H1 (cell line): ENCODE measurements at regions of chr6 and their contacts with region 1.

Region 1: GRCh38 chr6:109783250-109783986 is 92.3 kb downstream of the FIG4 start:
- DNase-seq: peak in 1 of 2 experiments; percentile 57
- H3K4me3 ChIP-seq: no peak overlapping the region
- H3K27ac ChIP-seq: no peak overlapping the region
- H3K4me1 ChIP-seq: no peaks in the 10 kb centered on the region
- H3K27me3 ChIP-seq: no peaks in the 10 kb centered on the region
- CTCF ChIP-seq: peak in 2 of 3 experiments; percentile 75 to 79; a peak in 3 of 4 replicates
- EP300 ChIP-seq: no peak
- POLR2A ChIP-seq: no peak
- RAD21 ChIP-seq: peak; percentile 80 to 86

Region 2: DNA sequence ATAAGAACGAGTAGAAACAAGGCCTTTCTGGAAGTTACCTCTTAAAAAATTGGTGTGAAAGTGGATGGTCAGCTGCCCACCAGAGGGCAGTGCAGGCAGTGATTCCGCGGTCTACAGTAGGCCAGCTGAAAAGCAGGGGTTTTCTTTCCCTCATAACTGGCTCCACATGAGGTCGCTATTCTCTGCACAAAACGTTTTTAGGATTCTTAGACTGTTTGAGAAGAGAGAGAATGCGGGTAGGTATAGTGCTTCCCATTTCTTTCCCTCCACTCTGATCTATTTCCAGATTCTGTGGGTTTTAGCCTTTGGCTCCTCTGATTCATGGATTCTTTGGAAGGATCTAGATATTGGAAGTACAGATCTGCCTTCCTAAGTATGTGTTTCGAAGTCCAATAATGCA is 78.2 kb before region 1 on chr6:
- CTCF ChIA-PET with region 1: interaction called, 52 read pairs
- POLR2A ChIA-PET with region 1: no interaction called
- DNase-seq: peak; percentile 75 to 83
- H3K4me3 ChIP-seq: no peak overlapping the region
- H3K27ac ChIP-seq: no peak overlapping the region
- H3K4me1 ChIP-seq: peaks cover 0 to 5% (median 3%) of the 10 kb centered on the region in 4 experiments; a peak in 5 of 7 replicates
- H3K27me3 ChIP-seq: no peaks in the 10 kb centered on the region
- CTCF ChIP-seq: peak; percentile 88 to 99 (median 98)
- EP300 ChIP-seq: no peak
- POLR2A ChIP-seq: no peak
- RAD21 ChIP-seq: peak; percentile 99 to 100

Region 3: DNA sequence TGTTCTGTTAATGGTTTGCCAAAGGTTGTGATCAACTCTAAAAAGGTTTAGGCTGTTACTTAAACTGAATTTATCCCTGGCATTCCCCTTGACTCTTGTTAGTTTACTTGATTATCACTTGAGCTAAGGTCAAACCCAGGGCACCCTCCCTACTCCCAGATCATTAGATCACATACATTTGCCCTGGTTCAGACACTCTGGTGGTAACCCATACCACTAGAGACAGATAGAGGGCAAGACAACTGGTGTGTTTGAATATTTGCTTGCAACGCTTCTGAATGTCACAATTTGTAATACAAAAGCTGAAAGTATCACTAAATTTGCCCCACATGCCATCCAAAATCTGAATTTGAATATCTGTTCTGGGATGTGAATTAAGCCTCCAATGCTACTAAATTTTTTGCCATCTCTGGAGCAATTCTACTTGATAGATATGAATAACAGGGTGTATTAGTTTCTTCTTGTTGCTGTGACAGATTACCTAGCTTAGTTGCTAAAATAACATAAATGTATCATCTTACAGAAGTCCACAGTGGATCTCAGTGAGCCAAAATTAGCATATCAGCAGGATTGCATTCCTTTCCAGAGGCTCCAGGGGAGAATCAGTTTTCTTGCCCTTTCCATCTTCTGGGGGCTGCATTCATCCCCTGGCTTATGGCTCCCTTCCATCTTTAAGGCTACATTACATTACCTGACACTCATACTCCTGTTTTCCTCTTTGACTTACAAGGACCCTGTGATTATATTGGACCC is 47.0 kb before region 1 on chr6:
- CTCF ChIA-PET with region 1: interaction called, 11 read pairs
- POLR2A ChIA-PET with region 1: no interaction called
- DNase-seq: no peak
- H3K4me3 ChIP-seq: peak overlapping the region in 1 of 4 experiments; percentile 20; a peak in 1 of 8 replicates
- H3K27ac ChIP-seq: no peak overlapping the region
- H3K4me1 ChIP-seq: peaks cover 4 to 16% (median 12%) of the 10 kb centered on the region in 4 experiments; a peak in 6 of 7 replicates
- H3K27me3 ChIP-seq: no peaks in the 10 kb centered on the region
- CTCF ChIP-seq: no peak
- EP300 ChIP-seq: no peak
- POLR2A ChIP-seq: no peak
- RAD21 ChIP-seq: no peak

Region 4: DNA sequence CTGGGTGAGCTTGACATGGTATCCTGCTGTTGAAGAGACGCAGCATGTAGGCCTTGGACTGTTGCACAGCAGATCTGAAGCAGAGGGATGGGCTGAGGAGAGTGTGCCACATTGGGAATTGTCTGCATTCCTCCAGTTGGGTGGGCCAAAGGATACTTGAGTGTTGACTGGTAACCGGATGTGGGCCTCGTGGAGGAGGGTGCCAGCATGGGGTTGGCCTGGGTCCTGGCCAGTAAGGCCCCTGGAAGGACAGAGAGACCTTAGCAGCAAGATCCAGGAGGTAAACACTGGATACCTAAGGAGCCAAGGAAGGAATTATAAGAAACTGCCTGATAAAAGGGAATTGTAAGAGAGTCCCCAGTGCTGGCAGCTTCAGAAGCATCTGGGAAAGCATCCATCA is 15.5 kb before region 1 on chr6:
- CTCF ChIA-PET with region 1: interaction called, 23 read pairs
- POLR2A ChIA-PET with region 1: no interaction called
- DNase-seq: no peak
- H3K4me3 ChIP-seq: no peak overlapping the region
- H3K27ac ChIP-seq: no peak overlapping the region
- H3K4me1 ChIP-seq: no peaks in the 10 kb centered on the region
- H3K27me3 ChIP-seq: no peaks in the 10 kb centered on the region; a peak in 1 of 7 replicates
- CTCF ChIP-seq: no peak
- EP300 ChIP-seq: no peak
- POLR2A ChIP-seq: no peak
- RAD21 ChIP-seq: no peak

Region 5: GRCh38 chr6:109801794-109802193 is 18.4 kb after region 1 on chr6:
- CTCF ChIA-PET with region 1: interaction called, 19 read pairs
- POLR2A ChIA-PET with region 1: no interaction called
- DNase-seq: no peak
- H3K4me3 ChIP-seq: no peak overlapping the region
- H3K27ac ChIP-seq: no peak overlapping the region
- H3K4me1 ChIP-seq: no peaks in the 10 kb centered on the region
- H3K27me3 ChIP-seq: no peaks in the 10 kb centered on the region
- CTCF ChIP-seq: no peak
- EP300 ChIP-seq: no peak
- POLR2A ChIP-seq: no peak
- RAD21 ChIP-seq: no peak

Region 6: DNA sequence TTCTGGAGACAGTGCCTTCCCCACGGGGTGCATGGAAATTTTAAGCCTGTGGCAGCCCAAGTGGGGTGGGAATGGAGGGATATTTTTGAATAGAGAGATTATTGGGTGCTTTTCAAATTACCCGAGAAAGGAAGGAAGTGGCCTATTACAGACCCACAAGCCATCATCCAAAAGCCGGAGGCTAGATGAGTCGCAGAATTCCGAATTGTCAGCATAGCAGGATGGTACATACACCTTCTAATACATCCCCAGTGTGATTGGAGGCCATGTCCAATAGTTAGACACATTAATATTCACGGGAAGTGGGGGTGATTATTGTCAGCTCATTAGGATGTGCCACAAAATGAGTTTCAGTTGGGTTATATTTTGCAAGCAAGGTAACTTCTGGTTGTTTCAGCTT is 40.7 kb after region 1 on chr6:
- CTCF ChIA-PET with region 1: interaction called, 12 read pairs
- POLR2A ChIA-PET with region 1: no interaction called
- DNase-seq: no peak
- H3K4me3 ChIP-seq: no peak overlapping the region
- H3K27ac ChIP-seq: no peak overlapping the region
- H3K4me1 ChIP-seq: peaks cover 0 to 8% (median 3%) of the 10 kb centered on the region in 4 experiments; a peak in 5 of 7 replicates
- H3K27me3 ChIP-seq: no peaks in the 10 kb centered on the region
- CTCF ChIP-seq: no peak
- EP300 ChIP-seq: no peak
- POLR2A ChIP-seq: no peak
- RAD21 ChIP-seq: no peak

Region 7: DNA sequence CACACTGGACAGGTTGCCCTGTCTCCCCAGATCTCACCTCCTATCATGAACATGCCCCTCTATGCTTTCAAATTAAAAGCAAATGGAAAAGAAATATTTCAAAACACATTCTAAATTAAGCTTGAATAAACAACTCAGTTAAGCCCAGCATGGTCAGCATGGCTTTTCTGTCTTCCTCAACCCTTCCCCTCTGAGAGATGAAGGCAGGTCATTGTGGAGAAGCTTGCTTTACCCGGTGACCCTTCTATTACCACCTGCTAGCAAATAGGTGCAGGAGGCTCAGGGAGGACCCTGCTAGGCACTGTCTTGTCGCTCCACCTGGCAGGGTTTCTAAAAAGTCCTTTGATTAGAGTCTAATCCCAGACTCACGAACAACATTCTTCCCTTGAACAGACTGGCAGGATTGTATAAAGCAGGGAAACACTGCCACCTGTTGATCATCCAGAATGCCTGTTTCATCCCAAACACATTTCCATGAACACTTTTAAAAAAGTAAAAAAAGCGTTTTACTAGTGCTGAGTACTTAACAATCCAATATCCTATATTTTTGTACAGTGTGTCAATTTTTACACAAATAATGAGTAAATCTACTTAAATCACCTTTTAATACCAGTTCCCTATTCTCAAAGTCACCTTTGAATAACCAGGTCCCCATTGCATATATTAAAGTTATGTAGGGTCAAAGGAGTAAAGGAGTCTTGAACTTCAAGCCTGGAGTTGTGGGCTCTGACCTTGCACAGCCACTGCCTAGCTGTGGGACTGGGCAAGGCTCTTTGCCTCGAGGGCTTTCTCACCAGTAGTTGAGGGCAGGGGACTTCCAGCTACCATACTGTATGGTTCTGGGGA is 270.2 kb after region 1 on chr6:
- CTCF ChIA-PET with region 1: interaction called, 29 read pairs
- POLR2A ChIA-PET with region 1: no interaction called
- DNase-seq: no peak
- H3K4me3 ChIP-seq: no peak overlapping the region
- H3K27ac ChIP-seq: no peak overlapping the region
- H3K4me1 ChIP-seq: peaks cover 0 to 3% (median 0%) of the 10 kb centered on the region in 4 experiments; a peak in 1 of 7 replicates
- H3K27me3 ChIP-seq: no peaks in the 10 kb centered on the region
- CTCF ChIP-seq: peak in 2 of 3 experiments; percentile 71 to 78; a peak in 3 of 4 replicates
- EP300 ChIP-seq: no peak
- POLR2A ChIP-seq: no peak
- RAD21 ChIP-seq: peak; percentile 90 to 91

Region 8: GRCh38 chr6:110799189-110799588 is 1015.8 kb after region 1 on chr6:
- CTCF ChIA-PET with region 1: no interaction called
- POLR2A ChIA-PET with region 1: no interaction called
- DNase-seq: no peak
- H3K4me3 ChIP-seq: no peak overlapping the region
- H3K27ac ChIP-seq: no peak overlapping the region
- H3K4me1 ChIP-seq: no peaks in the 10 kb centered on the region
- H3K27me3 ChIP-seq: no peaks in the 10 kb centered on the region
- CTCF ChIP-seq: no peak
- EP300 ChIP-seq: no peak
- POLR2A ChIP-seq: no peak
- RAD21 ChIP-seq: no peak